MCF 10A (cell line): ENCODE measurements at regions of chr15 and their contacts with region 1.

Region 1: DNA sequence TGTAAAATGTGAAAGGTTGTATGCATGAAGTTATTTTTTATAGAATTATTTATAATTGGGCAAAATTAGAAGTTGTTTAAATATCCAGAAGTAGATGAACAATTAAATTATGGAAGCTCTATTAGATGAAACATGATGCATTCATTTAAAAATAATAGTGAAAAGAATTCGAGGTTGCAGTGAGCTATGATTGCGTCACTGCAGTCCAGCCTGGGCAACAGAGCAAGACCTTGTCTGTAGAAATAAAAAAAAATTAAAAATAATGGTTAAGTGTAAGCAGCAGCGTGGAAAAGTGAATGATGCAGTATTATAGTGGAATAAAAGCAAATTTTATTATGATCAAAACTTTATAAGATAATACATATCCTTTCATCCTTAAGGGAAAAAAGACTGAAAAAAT is 14.3 kb downstream of the BUB1B start:
- DNase-seq: no peak
- H3K4me3 Mint-ChIP-seq: no peak overlapping the region
- H3K27ac Mint-ChIP-seq: no peak overlapping the region
- H3K4me1 Mint-ChIP-seq: peaks cover 24% of the 10 kb centered on the region
- H3K27me3 Mint-ChIP-seq: no peaks in the 10 kb centered on the region
- CTCF ChIP-seq: no peak

Region 2: DNA sequence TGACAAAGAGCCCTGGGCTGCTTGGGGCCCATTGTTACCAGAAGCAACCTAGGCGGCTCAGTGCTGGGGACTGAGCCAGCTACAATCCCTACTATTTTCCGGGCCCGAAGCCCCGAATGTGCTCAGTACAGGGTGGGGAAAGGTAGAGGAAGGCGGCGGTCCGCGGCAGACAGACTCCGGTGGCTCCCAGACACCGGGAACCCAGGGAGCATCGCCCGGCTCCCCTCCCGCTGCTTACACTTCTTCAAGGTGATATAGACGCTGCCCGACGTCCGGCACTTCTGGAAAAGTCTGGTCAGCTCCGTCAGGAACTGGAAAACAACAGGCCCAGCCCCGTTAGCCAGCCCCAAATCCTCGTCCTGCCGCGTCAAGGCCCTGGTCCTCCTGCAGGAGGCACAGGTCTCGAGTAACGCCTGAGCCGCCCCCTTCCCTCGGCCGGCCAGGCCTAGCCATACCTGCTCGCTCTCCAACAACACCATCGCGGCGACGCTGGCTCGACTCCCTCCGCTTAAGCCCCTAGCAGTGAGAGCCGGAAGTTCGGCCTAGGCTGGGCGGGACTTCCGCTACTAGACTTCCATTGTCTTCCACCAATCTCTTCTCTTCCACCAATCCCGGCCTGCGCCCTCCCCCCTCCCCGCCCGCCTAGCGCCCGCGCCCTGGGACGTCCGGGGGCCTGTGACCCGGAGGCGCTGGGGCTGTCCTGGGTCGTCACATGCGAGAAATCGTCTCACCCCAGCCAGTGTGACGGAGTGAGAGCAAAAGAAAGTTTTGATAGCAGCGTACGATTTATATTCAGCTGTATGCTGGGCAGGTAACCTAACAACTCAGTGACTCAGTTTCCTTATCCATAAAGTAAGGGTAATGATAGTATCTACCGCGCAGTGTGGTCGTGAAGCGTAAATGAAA is 136.3 kb before region 1 on chr15 and contains the start of gene SRP14:
- CTCF ChIA-PET with region 1: interaction called, 4 read pairs
- POLR2A ChIA-PET with region 1: interaction called, 12 read pairs
- intact Hi-C with region 1: no loop called
- DNase-seq: peak; percentile 93
- H3K4me3 Mint-ChIP-seq: peak within 1 kb of the TSS; percentile 92
- H3K27ac Mint-ChIP-seq: peak within 1 kb of the TSS; percentile 97
- H3K4me1 Mint-ChIP-seq: peaks cover 9% of the 10 kb centered on the region
- H3K27me3 Mint-ChIP-seq: no peaks in the 10 kb centered on the region
- CTCF ChIP-seq: no peak
- total RNA-seq, gene SRP14: 165 and 203 TPM in 2 replicates